H1 (cell line): ENCODE measurements at regions of chrX and their contacts with region 1.

Region 1: GRCh38 chrX:113982766-113983165 is 601.1 kb upstream of the HTR2C start:
- DNase-seq: no peak
- H3K4me3 ChIP-seq: no peak overlapping the region
- H3K27ac ChIP-seq: no peak overlapping the region
- H3K4me1 ChIP-seq: peaks cover 0 to 1% (median 0%) of the 10 kb centered on the region in 4 experiments; a peak in 1 of 7 replicates
- H3K27me3 ChIP-seq: no peaks in the 10 kb centered on the region
- CTCF ChIP-seq: no peak
- EP300 ChIP-seq: no peak
- POLR2A ChIP-seq: no peak
- RAD21 ChIP-seq: no peak

Region 2: DNA sequence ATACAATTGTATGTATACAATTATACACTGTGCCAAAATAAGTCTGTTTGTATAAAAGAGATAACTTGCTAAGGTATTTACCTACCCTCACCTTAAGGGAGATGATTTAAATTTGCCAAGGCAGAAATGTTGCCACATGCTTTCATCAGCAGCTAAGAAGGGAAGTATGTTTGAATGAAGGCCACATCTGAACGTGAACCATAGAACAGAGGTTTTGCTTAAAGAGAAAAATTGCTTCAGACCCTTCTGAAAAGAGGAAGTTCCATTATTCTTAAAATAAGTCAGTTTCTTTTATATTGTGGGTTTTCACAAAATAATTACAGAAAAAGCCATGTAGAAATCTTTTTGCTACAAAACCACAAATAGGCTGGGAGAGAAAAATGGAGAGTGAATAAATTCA is 20.4 kb before region 1 on chrX:
- CTCF ChIA-PET with region 1: no interaction called
- POLR2A ChIA-PET with region 1: interaction called, 11 read pairs
- DNase-seq: no peak
- H3K4me3 ChIP-seq: no peak overlapping the region
- H3K27ac ChIP-seq: no peak overlapping the region
- H3K4me1 ChIP-seq: peaks cover 0 to 15% (median 4%) of the 10 kb centered on the region in 4 experiments; a peak in 3 of 7 replicates
- H3K27me3 ChIP-seq: no peaks in the 10 kb centered on the region
- CTCF ChIP-seq: no peak
- EP300 ChIP-seq: no peak
- POLR2A ChIP-seq: no peak
- RAD21 ChIP-seq: no peak

Region 3: GRCh38 chrX:114087543-114087942 is 104.8 kb after region 1 on chrX:
- CTCF ChIA-PET with region 1: no interaction called
- POLR2A ChIA-PET with region 1: no interaction called
- DNase-seq: no peak
- H3K4me3 ChIP-seq: no peak overlapping the region
- H3K27ac ChIP-seq: no peak overlapping the region
- H3K4me1 ChIP-seq: no peaks in the 10 kb centered on the region
- H3K27me3 ChIP-seq: no peaks in the 10 kb centered on the region
- CTCF ChIP-seq: no peak
- EP300 ChIP-seq: no peak
- POLR2A ChIP-seq: no peak
- RAD21 ChIP-seq: no peak